ENCODE measurements at regions of chr1 and their contacts with region 1.

Region 1: GRCh38 chr1:116151739-116152576 is 40.8 kb downstream of the MAB21L3 start:
- DNase-seq: peak; percentile 51 to 93 (median 69)
- ATAC-seq: peak; percentile 89
- H3K4me3 ChIP-seq: peak overlapping the region; percentile 48
- H3K4me3 Mint-ChIP-seq: peak overlapping the region; percentile 81
- H3K27ac ChIP-seq: peak overlapping the region; percentile 45 to 69
- H3K27ac Mint-ChIP-seq: peak overlapping the region; percentile 91
- H3K4me1 ChIP-seq: peaks cover 22% of the 10 kb centered on the region
- H3K4me1 Mint-ChIP-seq: peaks cover 31% of the 10 kb centered on the region
- H3K27me3 ChIP-seq: no peaks in the 10 kb centered on the region
- H3K27me3 Mint-ChIP-seq: no peaks in the 10 kb centered on the region
- CTCF ChIP-seq: peak; percentile 86

Region 2: GRCh38 chr1:116168277-116169097 is 16.5 kb after region 1 on chr1:
- CTCF ChIA-PET with region 1: interaction called, 15 read pairs
- POLR2A ChIA-PET with region 1: interaction called, 5 read pairs
- intact Hi-C with region 1: no loop called
- DNase-seq: peak; percentile 73 to 93 (median 84)
- ATAC-seq: peak; percentile 99
- H3K4me3 ChIP-seq: peak overlapping the region; percentile 63
- H3K4me3 Mint-ChIP-seq: peak overlapping the region; percentile 86
- H3K27ac ChIP-seq: peak overlapping the region in 1 of 2 donors; percentile 26
- H3K27ac Mint-ChIP-seq: peak overlapping the region; percentile 66
- H3K4me1 ChIP-seq: peaks cover 20% of the 10 kb centered on the region
- H3K4me1 Mint-ChIP-seq: peaks cover 21% of the 10 kb centered on the region
- H3K27me3 ChIP-seq: no peaks in the 10 kb centered on the region
- H3K27me3 Mint-ChIP-seq: no peaks in the 10 kb centered on the region
- CTCF ChIP-seq: peak; percentile 94

Region 3: GRCh38 chr1:116179419-116179818 is 27.5 kb after region 1 on chr1:
- CTCF ChIA-PET with region 1: no interaction called
- POLR2A ChIA-PET with region 1: no interaction called
- intact Hi-C with region 1: no loop called
- DNase-seq: no peak
- ATAC-seq: no peak
- H3K4me3 ChIP-seq: no peak overlapping the region
- H3K4me3 Mint-ChIP-seq: no peak overlapping the region
- H3K27ac ChIP-seq: no peak overlapping the region
- H3K27ac Mint-ChIP-seq: no peak overlapping the region
- H3K4me1 ChIP-seq: peaks cover 3% of the 10 kb centered on the region
- H3K4me1 Mint-ChIP-seq: no peaks in the 10 kb centered on the region
- H3K27me3 ChIP-seq: no peaks in the 10 kb centered on the region
- H3K27me3 Mint-ChIP-seq: peaks cover 7% of the 10 kb centered on the region
- CTCF ChIP-seq: no peak

Region 4: GRCh38 chr1:116334015-116334547 is 182.1 kb after region 1 on chr1:
- CTCF ChIA-PET with region 1: no interaction called
- POLR2A ChIA-PET with region 1: no interaction called
- intact Hi-C with region 1: loop called in 1 of 2 experiments (anchors 10 kb)
- DNase-seq: no peak
- ATAC-seq: no peak
- H3K4me3 ChIP-seq: no peak overlapping the region
- H3K4me3 Mint-ChIP-seq: no peak overlapping the region
- H3K27ac ChIP-seq: no peak overlapping the region
- H3K27ac Mint-ChIP-seq: no peak overlapping the region
- H3K4me1 ChIP-seq: peaks cover 17% of the 10 kb centered on the region
- H3K4me1 Mint-ChIP-seq: peaks cover 77% of the 10 kb centered on the region
- H3K27me3 ChIP-seq: no peaks in the 10 kb centered on the region
- H3K27me3 Mint-ChIP-seq: no peaks in the 10 kb centered on the region
- CTCF ChIP-seq: no peak